Heart left ventricle (tissue), 16 donors: ENCODE measurements at regions of chr7 and their contacts with region 1.

Region 1: DNA sequence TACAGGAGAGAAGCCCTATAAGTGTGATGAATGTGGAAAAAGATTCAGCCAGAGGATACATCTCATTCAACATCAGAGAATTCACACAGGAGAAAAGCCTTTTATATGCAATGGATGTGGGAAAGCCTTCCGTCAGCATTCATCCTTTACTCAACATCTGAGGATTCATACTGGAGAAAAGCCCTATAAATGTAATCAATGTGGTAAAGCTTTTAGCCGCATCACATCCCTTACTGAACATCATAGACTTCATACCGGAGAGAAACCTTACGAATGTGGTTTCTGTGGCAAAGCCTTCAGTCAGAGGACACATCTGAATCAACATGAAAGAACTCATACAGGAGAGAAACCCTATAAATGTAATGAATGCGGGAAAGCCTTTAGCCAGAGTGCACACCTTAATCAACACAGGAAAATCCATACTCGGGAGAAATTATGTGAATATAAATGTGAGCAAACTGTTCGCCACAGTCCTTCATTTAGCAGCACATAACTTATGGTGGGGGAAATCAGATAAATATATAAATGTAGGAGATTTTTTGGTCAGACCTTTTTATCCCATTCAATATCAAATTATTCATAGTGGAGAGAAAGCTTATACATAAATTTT is 12.1 kb upstream of the MRPS17 start:
- DNase-seq: no peak
- ATAC-seq: no peak
- H3K4me3 ChIP-seq: no peak overlapping the region
- H3K27ac ChIP-seq: no peak overlapping the region
- H3K4me1 ChIP-seq: no peaks in the 10 kb centered on the region
- H3K27me3 ChIP-seq: no peaks in the 10 kb centered on the region
- CTCF ChIP-seq: no peak
- POLR2A ChIP-seq: no peak

Region 2: DNA sequence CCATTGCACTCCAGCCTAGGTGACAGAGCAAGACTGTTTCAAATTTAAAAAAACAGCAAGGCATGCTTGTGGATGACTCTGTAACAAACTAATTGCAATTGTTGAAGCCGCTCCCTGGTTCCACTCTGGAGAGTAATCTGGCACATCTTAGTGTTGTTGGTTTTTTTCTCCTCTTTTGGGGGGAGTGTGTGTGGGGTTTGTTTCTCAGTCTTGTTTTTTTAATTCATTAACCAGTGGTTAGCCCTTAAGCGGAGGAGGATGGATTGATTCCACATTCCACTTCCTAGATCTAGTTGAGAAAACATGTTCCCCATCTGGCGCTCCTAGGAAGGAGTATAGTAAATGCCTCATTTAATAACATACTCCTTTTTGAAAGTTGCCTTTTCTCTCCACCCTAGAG is 60.9 kb before region 1 on chr7:
- intact Hi-C with region 1: no loop called
- DNase-seq: no peak
- ATAC-seq: no peak
- H3K4me3 ChIP-seq: no peak overlapping the region
- H3K27ac ChIP-seq: no peak overlapping the region
- H3K4me1 ChIP-seq: no peaks in the 10 kb centered on the region
- H3K27me3 ChIP-seq: no peaks in the 10 kb centered on the region
- CTCF ChIP-seq: no peak
- POLR2A ChIP-seq: no peak

Region 3: GRCh38 chr7:55898287-55898686 is 41.3 kb before region 1 on chr7:
- intact Hi-C with region 1: loop called in 1 of 10 experiments (anchors 10 kb)
- DNase-seq: no peak
- ATAC-seq: no peak
- H3K4me3 ChIP-seq: no peak overlapping the region
- H3K27ac ChIP-seq: no peak overlapping the region
- H3K4me1 ChIP-seq: no peaks in the 10 kb centered on the region
- H3K27me3 ChIP-seq: no peaks in the 10 kb centered on the region
- CTCF ChIP-seq: no peak
- POLR2A ChIP-seq: no peak

Region 4: DNA sequence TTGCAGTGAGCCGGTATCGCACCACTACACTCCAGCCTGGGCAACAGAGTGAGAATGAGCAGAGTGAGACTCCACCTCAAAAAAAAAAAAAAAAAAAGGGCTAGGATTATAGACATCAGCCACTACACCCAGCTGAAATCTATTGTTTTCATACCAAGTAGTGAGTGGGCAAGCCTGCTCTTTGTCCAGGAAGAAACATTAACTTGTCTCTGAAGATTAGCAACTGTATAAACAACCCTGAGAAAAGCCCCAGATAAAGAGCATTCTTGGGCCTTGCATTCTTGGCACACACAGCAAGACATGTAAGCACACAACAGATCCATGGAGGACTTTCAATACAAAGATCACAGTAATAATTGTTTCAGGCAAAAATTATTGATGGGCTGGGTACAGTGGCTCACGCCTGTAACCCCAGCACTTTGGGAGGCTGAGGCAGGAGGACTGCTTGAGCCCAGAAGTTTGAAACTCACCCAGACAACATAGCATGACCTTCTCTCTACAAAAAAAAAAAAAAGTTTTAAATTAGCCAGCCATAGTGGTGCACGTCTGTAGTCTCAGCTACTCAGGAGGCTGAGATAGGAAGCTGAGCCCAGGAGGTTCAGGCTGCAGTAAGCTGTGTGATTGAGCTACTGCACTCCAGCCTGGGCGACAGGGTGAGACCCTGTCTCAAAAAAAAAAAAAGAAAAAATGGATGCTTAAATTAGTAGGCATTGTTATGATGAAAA is 107.3 kb after region 1 on chr7:
- intact Hi-C with region 1: no loop called
- DNase-seq: no peak
- ATAC-seq: no peak
- H3K4me3 ChIP-seq: no peak overlapping the region
- H3K27ac ChIP-seq: peak overlapping the region in 5 of 12 donors; percentile 15 to 66 (median 24)
- H3K4me1 ChIP-seq: peaks cover 0 to 34% (median 15%) of the 10 kb centered on the region in 12 donors
- H3K27me3 ChIP-seq: no peaks in the 10 kb centered on the region
- CTCF ChIP-seq: no peak
- POLR2A ChIP-seq: no peak